CD8-positive, alpha-beta memory T cell (primary cell): ENCODE measurements at regions of chr15 and their contacts with region 1.

Region 1: GRCh38 chr15:85625856-85626255 is 168.9 kb downstream of the KLHL25 start:
- DNase-seq: peak in 3 of 5 donors; percentile 12 to 75 (median 59)
- H3K4me3 ChIP-seq: no peak overlapping the region
- H3K4me3 Mint-ChIP-seq: peak overlapping the region; percentile 57 to 80 (median 75)
- H3K27ac ChIP-seq: peak overlapping the region; percentile 72
- H3K27ac Mint-ChIP-seq: peak overlapping the region; percentile 80 to 98 (median 94)
- H3K4me1 ChIP-seq: peaks cover 37% of the 10 kb centered on the region
- H3K4me1 Mint-ChIP-seq: peaks cover 20 to 74% (median 66%) of the 10 kb centered on the region in 3 donors
- H3K27me3 ChIP-seq: no peaks in the 10 kb centered on the region
- H3K27me3 Mint-ChIP-seq: no peaks in the 10 kb centered on the region

Region 2: DNA sequence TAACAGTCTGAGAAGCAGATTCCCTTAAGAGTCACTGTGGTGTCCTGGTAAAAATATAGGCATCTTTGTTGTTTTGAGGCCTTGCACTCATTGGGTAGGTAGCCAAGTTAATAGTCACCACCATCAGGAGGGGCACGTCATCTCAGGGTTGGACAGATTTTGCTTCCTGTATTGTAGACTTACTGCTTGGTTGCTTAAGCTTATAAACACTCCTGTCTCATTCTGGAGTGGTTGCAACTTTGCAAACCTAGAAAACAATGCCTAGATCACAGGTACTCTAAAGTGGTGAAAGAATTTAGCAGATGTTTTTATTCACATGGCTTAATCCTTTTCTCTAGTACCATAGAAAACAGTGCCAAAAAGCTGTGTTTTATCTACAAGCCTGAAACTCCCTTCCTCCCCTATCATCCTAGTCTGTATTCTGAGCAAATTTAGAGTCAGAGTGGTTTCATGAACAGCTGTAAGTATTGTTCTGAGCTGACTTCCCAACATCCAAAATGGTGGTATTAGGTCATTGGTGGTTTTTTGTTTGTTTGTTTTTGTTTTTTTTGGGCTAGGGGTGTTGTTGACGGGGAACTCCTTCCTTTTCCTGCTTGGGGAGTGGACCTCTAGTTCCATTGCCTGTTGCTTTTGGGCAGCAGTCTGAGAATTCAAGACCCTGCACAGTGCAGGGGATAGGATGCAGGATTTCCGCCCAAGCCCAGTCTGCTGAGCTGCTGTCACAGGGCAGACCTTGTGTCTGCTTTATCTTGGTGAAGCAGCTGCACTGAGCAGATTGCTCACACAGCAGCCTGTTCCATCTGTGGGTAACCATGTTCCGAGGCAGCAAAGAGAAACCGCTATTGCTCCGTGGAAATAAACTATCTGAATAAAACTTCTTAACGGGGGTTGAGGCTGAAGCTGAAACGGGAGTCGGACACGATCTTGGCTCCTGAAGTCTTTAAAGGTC is 43.5 kb before region 1 on chr15:
- CTCF ChIA-PET with region 1: no interaction called
- POLR2A ChIA-PET with region 1: interaction called, 15 read pairs
- DNase-seq: peak; percentile 40 to 86 (median 59)
- H3K4me3 ChIP-seq: peak overlapping the region; percentile 63
- H3K4me3 Mint-ChIP-seq: peak overlapping the region; percentile 87 to 98 (median 92)
- H3K27ac ChIP-seq: peak overlapping the region; percentile 93
- H3K27ac Mint-ChIP-seq: peak overlapping the region; percentile 91 to 100 (median 98)
- H3K4me1 ChIP-seq: peaks cover 60% of the 10 kb centered on the region
- H3K4me1 Mint-ChIP-seq: peaks cover 71 to 83% (median 82%) of the 10 kb centered on the region in 3 donors
- H3K27me3 ChIP-seq: no peaks in the 10 kb centered on the region
- H3K27me3 Mint-ChIP-seq: no peaks in the 10 kb centered on the region

Region 3: DNA sequence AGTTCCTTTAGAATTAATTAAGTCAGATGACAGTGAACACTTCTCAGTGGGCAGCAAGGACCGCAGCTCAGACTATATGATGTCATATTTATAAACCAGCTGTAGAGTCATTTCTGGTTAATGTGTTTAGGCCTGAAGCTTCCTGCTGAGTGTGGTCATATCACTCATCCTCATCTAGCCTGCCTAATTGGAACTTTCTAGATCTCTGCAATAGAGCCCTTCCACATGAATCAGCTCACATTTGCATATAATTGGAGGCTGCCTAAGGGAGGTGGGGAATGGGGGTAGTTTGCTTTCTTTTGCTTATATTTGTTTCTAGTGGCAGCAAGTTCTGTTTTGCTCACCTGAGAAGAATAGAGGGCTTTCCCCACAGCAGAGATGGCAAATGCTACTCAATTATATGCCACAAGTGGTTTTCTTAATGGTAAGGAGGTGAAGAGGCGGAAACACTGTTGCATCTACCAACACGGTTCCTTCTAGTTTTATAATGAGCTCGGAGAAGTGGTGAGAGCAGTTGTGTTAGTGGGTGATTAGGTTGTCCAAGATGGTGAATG is 20.8 kb after region 1 on chr15:
- CTCF ChIA-PET with region 1: interaction called, 4 read pairs
- POLR2A ChIA-PET with region 1: interaction called, 10 read pairs
- DNase-seq: peak in 4 of 5 donors; percentile 34 to 74 (median 56)
- H3K4me3 ChIP-seq: no peak overlapping the region
- H3K4me3 Mint-ChIP-seq: peak overlapping the region; percentile 18 to 73 (median 37)
- H3K27ac ChIP-seq: peak overlapping the region; percentile 50
- H3K27ac Mint-ChIP-seq: peak overlapping the region; percentile 82 to 96 (median 92)
- H3K4me1 ChIP-seq: peaks cover 27% of the 10 kb centered on the region
- H3K4me1 Mint-ChIP-seq: peaks cover 49 to 75% (median 57%) of the 10 kb centered on the region in 3 donors
- H3K27me3 ChIP-seq: no peaks in the 10 kb centered on the region
- H3K27me3 Mint-ChIP-seq: no peaks in the 10 kb centered on the region

Region 4: DNA sequence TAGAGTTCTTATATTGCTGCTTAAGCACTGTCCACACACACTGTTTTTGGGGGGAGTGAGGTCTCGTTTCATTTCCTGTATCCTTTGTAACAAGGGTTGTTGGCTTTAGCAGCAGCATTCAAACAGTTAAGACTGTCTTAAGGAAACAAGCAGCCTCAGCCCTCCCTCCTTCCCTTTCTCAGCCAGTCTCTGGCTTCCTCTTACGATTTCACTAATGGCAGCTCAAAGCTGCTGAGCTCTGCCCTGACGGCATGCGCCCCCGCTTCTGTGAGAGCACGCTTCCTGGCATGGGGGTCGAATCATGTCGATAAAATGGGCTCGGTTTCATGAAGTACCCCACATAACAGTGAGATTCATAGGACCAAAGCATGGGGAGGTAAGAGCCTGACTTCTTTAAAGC is 63.9 kb after region 1 on chr15:
- CTCF ChIA-PET with region 1: interaction called, 3 read pairs
- POLR2A ChIA-PET with region 1: interaction called, 25 read pairs
- DNase-seq: peak; percentile 47 to 85 (median 77)
- H3K4me3 ChIP-seq: peak overlapping the region; percentile 81
- H3K4me3 Mint-ChIP-seq: peak overlapping the region; percentile 94 to 99 (median 96)
- H3K27ac ChIP-seq: peak overlapping the region; percentile 88
- H3K27ac Mint-ChIP-seq: peak overlapping the region; percentile 90 to 100 (median 99)
- H3K4me1 ChIP-seq: peaks cover 57% of the 10 kb centered on the region
- H3K4me1 Mint-ChIP-seq: peaks cover 63 to 75% (median 73%) of the 10 kb centered on the region in 3 donors
- H3K27me3 ChIP-seq: no peaks in the 10 kb centered on the region
- H3K27me3 Mint-ChIP-seq: no peaks in the 10 kb centered on the region